GM12878 (cell line): ENCODE measurements at regions of chr14 and their contacts with region 1.

Region 1: GRCh38 chr14:54488646-54489317 is at the start of gene GMFB:
- DNase-seq: peak; percentile 52
- ATAC-seq: peak; percentile 97
- H3K4me3 ChIP-seq: peak within 1 kb of the TSS; percentile 92
- H3K27ac ChIP-seq: peak within 1 kb of the TSS; percentile 90
- H3K4me1 ChIP-seq: no peaks in the 10 kb centered on the region; the same call in 1 of the 2 replicates
- H3K27me3 ChIP-seq: no peaks in the 10 kb centered on the region
- CTCF ChIP-seq: peak; percentile 27 to 37 (median 34); a peak in 4 of 6 replicates
- EP300 ChIP-seq: 0 out of 4 replicates have a peak, but pooled peaks of 1 of the 2 experiments have one; percentile 6
- POLR2A ChIP-seq: peak; percentile 88
- RAD21 ChIP-seq: no peak
- polyA plus RNA-seq, gene GMFB: 29.8 to 51.9 TPM

Region 2: DNA sequence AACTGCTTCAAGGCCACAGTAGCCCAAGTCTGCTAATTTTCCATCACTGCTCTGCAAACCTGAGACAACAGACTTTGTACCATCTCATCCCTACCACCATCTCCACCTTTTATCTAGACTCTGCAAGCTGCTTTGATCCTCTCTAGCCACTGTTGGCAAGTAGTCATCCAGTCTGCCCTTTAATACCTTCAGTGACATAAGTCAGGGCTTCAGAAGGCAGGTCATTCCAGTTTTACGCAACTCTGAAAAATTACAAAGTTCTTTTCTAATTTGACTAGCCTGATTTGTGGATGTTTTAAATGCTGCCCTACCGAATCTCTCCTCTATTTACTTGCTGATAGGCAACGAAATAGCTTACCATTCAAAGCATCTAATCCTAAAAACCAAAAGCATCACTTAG is 1540.7 kb before region 1 on chr14:
- CTCF ChIA-PET with region 1: no interaction called
- POLR2A ChIA-PET with region 1: no interaction called
- RAD21 ChIA-PET with region 1: no interaction called
- SMC1A ChIA-PET with region 1: no interaction called
- in situ Hi-C with region 1: no loop called
- intact Hi-C with region 1: no loop called
- DNase-seq: no peak
- ATAC-seq: no peak
- H3K4me3 ChIP-seq: no peak overlapping the region
- H3K27ac ChIP-seq: no peak overlapping the region
- H3K4me1 ChIP-seq: peaks cover 3% of the 10 kb centered on the region; the same call in 1 of the 2 replicates
- H3K27me3 ChIP-seq: peaks cover 1 to 18% of the 10 kb centered on the region in 2 experiments
- CTCF ChIP-seq: no peak
- EP300 ChIP-seq: no peak
- POLR2A ChIP-seq: no peak
- RAD21 ChIP-seq: no peak

Region 3: GRCh38 chr14:54396493-54397335 is 92.1 kb before region 1 on chr14 and contains the start of gene CDKN3:
- CTCF ChIA-PET with region 1: no interaction called
- POLR2A ChIA-PET with region 1: interaction called, 6 read pairs
- RAD21 ChIA-PET with region 1: interaction called, 16 read pairs
- SMC1A ChIA-PET with region 1: interaction called, 5 read pairs
- in situ Hi-C with region 1: no loop called
- intact Hi-C with region 1: loop called (anchors 5 kb)
- DNase-seq: peak; percentile 95
- ATAC-seq: peak; percentile 97
- H3K4me3 ChIP-seq: peak within 1 kb of the TSS; percentile 75
- H3K27ac ChIP-seq: peak within 1 kb of the TSS; percentile 81
- H3K4me1 ChIP-seq: no peaks in the 10 kb centered on the region
- H3K27me3 ChIP-seq: no peaks in the 10 kb centered on the region
- CTCF ChIP-seq: peak in 2 of 3 experiments; percentile 39 to 50; a peak in 3 of 6 replicates
- EP300 ChIP-seq: no peak
- POLR2A ChIP-seq: peak; percentile 99
- RAD21 ChIP-seq: no peak
- polyA plus RNA-seq, gene CDKN3: 173 to 197 TPM

Region 4: GRCh38 chr14:54440873-54441868 is 47.6 kb before region 1 on chr14 and contains the start of gene CNIH1:
- CTCF ChIA-PET with region 1: interaction called, 9 read pairs
- POLR2A ChIA-PET with region 1: interaction called, 3 read pairs
- RAD21 ChIA-PET with region 1: interaction called, 8 read pairs
- SMC1A ChIA-PET with region 1: interaction called, 13 read pairs
- in situ Hi-C with region 1: no loop called
- intact Hi-C with region 1: loop called (anchors 2 kb)
- DNase-seq: peak; percentile 63
- ATAC-seq: peak; percentile 95
- H3K4me3 ChIP-seq: peak within 1 kb of the TSS; percentile 72
- H3K27ac ChIP-seq: peak within 1 kb of the TSS; percentile 85
- H3K4me1 ChIP-seq: peaks cover 9% of the 10 kb centered on the region
- H3K27me3 ChIP-seq: no peaks in the 10 kb centered on the region
- CTCF ChIP-seq: peak; percentile 89 to 97 (median 96); a peak in 5 of 6 replicates
- EP300 ChIP-seq: peak; percentile 14 to 64; a peak in 1 of 4 replicates
- POLR2A ChIP-seq: peak; percentile 93
- RAD21 ChIP-seq: 0 out of 2 replicates have a peak, but pooled peaks have one; percentile 26
- polyA plus RNA-seq, gene CNIH1: 206 to 274 TPM

Region 5: DNA sequence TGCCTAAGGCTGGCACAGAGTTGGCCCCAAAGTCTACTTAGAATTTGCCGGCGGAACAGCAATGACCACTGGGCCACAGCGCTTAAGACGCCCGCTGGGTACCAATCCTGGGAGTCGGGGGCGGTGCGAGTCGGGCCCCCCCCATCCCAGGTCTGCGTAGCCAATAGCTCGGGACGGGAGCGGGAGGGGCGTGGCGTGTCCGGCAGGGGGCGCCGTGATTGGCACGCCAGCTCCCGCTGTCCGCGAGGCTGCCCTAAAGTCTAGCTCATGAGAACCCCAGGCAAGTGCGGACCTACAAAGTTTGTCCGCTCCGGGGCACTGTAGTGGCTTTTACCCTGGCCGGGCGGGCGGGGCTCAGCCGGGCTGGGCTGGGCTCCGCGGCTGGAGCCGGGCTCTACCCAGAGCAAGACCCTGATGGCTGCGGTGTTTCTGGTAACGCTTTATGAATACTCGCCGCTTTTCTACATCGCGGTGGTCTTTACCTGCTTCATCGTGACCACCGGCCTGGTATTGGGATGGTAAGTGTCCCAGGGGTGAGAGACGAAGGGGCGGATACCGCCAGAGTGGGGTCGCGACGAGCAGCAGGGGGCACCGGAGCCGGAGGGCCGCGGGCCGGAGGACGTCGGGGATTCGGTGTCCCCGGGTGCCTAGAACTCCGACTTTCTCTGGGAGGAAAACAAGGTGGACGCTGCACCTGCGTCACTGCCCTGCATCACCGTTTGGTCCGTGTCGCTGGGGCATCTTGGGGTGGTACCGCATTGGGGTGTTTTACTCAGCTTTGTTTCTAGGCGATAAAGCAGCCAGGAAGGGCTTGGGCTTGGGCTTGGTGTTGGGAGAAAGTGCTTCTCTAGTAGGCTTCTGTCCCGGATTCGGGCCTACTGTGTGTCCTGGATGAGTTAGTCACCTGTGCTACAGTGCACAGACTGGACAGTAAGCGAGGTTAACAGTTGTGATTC is 21.0 kb after region 1 on chr14 and contains the start of gene CGRRF1:
- CTCF ChIA-PET with region 1: interaction called, 22 read pairs
- POLR2A ChIA-PET with region 1: interaction called, 19 read pairs
- RAD21 ChIA-PET with region 1: interaction called, 15 read pairs
- SMC1A ChIA-PET with region 1: interaction called, 7 read pairs
- in situ Hi-C with region 1: no loop called
- intact Hi-C with region 1: loop called (anchors 2 kb)
- DNase-seq: peak; percentile 91
- ATAC-seq: peak; percentile 98
- H3K4me3 ChIP-seq: peak within 1 kb of the TSS; percentile 91
- H3K27ac ChIP-seq: peak within 1 kb of the TSS; percentile 72
- H3K4me1 ChIP-seq: peaks cover 3% of the 10 kb centered on the region
- H3K27me3 ChIP-seq: no peaks in the 10 kb centered on the region
- CTCF ChIP-seq: peak; percentile 5 to 52 (median 30); a peak in 4 of 6 replicates
- EP300 ChIP-seq: peak in 1 of 2 experiments; percentile 19; a peak in 1 of 4 replicates
- POLR2A ChIP-seq: peak; percentile 76
- RAD21 ChIP-seq: 0 out of 2 replicates have a peak, but pooled peaks have one; percentile 28
- polyA plus RNA-seq, gene CGRRF1: 32.1 to 47.7 TPM